ENCODE measurements at regions of chr19 and their contacts with region 1.

Region 1: GRCh38 chr19:48965040-48965805 is at the start of gene FTL:
- DNase-seq: peak; percentile 97 to 99 (median 98)
- ATAC-seq: peak; percentile 80
- H3K4me3 ChIP-seq: peak within 1 kb of the TSS; percentile 81
- H3K4me1 ChIP-seq: peaks cover 46% of the 10 kb centered on the region
- CTCF ChIP-seq: no peak
- total RNA-seq, gene FTL: 1,659 to 1,792 (median 1,691) TPM

Region 2: GRCh38 chr19:48872182-48872883 is 92.9 kb before region 1 on chr19 and contains the start of gene PPP1R15A:
- intact Hi-C with region 1: loop called in 1 of 2 experiments (anchors 10 kb)
- DNase-seq: peak; percentile 98 to 100 (median 99)
- ATAC-seq: peak; percentile 78
- H3K4me3 ChIP-seq: peak within 1 kb of the TSS; percentile 87
- H3K4me1 ChIP-seq: peaks cover 37% of the 10 kb centered on the region
- CTCF ChIP-seq: no peak
- total RNA-seq, gene PPP1R15A: 31.8 to 47.7 (median 44.6) TPM

Region 3: GRCh38 chr19:48918801-48919247 is 46.4 kb before region 1 on chr19:
- intact Hi-C with region 1: no loop called
- DNase-seq: no peak
- ATAC-seq: peak; percentile 53
- H3K4me3 ChIP-seq: no peak overlapping the region
- H3K4me1 ChIP-seq: no peaks in the 10 kb centered on the region
- CTCF ChIP-seq: no peak

Region 4: DNA sequence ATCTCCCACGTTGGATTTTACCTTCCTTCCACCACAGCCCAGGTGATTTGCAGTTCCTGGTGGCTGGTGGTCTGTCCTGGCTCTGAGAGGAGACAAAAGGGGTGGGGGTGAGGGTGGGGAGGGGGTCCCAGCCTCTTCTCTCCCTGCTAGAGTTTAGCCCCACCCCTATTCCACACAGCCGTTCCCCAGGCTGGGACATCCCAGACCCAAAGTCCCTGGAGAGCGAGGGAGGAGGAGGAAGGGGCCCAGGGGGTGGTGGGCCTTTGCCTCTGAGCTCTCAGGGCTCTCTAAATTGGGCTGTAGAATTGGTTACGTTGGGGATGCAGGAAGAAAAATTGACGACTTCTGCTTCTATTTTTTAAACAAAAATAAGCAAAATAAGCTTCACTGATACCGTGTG is 277.9 kb after region 1 on chr19:
- intact Hi-C with region 1: no loop called
- DNase-seq: no peak
- ATAC-seq: no peak
- H3K4me3 ChIP-seq: no peak overlapping the region
- H3K4me1 ChIP-seq: no peaks in the 10 kb centered on the region
- CTCF ChIP-seq: no peak